HEK293 (cell line): ENCODE measurements at regions of chr4 and their contacts with region 1.

Region 1: DNA sequence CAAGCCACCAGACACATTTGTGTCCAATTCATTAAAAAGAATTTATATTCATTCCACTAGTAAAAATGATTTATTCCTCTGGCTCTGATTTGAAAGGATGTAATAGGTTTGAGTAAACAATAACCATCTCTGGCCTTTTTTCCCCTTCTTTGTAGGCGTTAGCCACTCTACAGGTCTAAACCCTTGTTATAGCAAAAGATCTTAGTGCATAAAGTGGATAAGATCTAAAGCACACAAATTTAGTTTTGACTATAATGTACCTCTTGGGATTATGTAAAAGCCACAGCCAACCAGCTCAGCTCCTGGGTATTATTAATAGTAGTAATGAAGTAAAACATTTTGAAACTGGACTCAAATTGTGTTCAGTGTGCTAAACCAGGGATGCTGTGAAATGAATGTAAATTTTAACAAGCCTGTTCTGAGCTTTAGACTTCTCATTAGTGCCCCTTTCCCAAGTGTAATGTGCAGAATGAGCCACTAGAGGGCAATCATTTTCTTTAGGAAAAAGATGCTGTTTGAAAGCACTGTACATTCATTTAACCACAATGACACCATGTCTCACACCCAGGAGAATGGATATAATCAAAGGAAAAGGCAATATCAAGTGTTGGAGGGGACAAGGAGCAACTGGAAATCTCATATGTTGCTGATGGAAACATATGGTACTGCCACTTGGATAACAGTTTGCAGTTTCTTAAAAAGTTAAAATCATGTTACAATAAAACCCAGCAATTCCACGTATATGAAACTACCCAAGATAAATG is 69.7 kb downstream of the KLHL8 start:
- H3K4me3 ChIP-seq: no peak overlapping the region
- H3K27ac ChIP-seq: no peak overlapping the region
- H3K4me1 ChIP-seq: no peaks in the 10 kb centered on the region
- CTCF ChIP-seq: peak; percentile 35

Region 2: DNA sequence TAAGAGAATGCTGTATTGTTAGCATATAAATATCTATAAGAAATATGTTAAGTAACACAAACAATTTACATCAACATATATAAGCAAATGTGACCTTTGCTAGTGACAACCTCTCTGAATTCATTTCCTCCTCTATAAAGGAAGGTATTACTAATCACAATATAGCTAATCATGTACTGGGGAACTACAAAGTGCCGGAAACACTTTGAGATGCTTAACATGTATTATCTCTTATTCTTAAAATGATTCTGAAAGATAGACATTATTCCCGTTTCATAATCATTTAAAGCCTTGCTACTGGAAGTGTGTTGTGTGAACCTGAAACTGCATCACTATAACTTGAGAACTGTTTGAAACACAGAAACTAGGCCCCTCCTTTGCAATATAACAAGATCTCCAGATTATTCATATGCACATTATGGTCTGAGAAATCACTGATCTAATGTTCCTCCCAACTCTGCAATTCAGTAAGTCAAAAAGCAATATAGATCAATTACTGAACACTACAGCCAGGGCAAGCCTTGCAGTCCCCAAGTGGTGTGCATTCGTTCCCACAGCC is 15.7 kb after region 1 on chr4:
- CTCF ChIA-PET with region 1: interaction called, 11 read pairs
- POLR2A ChIA-PET with region 1: no interaction called
- H3K4me3 ChIP-seq: no peak overlapping the region
- H3K27ac ChIP-seq: no peak overlapping the region
- H3K4me1 ChIP-seq: no peaks in the 10 kb centered on the region
- CTCF ChIP-seq: no peak

Region 3: DNA sequence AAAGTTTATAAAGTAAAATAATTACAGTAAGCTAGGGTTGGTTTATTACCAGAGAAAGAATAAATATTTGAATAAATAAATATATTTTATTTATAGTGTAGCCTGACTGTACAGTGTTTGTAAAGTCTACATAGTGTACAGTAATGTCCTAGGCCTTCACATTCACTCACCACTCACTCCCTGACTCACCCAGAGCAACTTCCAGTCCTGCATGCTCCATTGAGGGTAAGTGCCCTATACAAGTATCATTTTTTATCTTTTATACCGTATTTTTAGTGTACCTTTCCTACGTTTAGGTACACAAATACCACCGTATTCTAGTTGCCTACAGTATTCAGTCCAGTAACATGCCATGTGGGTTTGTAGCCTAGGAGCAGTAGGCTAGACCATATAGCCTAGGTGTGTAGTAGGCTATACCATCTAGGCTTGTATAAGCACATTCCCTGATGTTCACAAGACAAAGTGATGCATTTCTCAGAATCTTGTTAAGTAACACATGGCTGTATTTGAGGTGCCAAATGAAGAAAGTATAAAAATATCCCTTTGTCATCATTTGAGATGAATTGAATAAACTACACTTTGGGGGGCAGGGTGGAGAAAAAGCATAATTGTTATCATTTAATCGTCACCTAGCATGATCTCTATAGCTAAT is 84.5 kb after region 1 on chr4:
- CTCF ChIA-PET with region 1: interaction called, 42 read pairs
- POLR2A ChIA-PET with region 1: no interaction called
- H3K4me3 ChIP-seq: no peak overlapping the region
- H3K27ac ChIP-seq: no peak overlapping the region
- H3K4me1 ChIP-seq: no peaks in the 10 kb centered on the region
- CTCF ChIP-seq: no peak

Region 4: DNA sequence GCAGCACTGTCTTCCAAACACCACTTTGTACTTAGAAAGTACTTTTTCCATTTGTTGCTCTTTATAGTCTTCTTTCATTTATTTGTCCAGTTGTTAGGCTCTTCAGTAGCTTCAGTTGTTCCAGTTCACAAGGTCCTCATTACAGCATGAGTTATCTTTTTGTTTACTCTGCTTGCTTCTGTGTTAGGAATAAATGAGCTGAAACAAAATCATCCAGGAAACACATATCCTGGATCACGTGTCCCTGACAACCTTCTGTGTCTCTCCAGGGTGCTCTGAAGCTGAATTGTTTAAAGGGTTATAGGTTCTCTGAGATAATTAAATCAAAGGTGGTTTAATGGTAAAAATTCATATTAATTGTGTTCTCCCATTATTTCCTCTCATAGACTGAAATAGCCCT is 89.7 kb after region 1 on chr4:
- CTCF ChIA-PET with region 1: interaction called, 42 read pairs
- POLR2A ChIA-PET with region 1: interaction called, 3 read pairs
- H3K4me3 ChIP-seq: no peak overlapping the region
- H3K27ac ChIP-seq: no peak overlapping the region
- H3K4me1 ChIP-seq: no peaks in the 10 kb centered on the region
- CTCF ChIP-seq: no peak